Right ventricle myocardium superior (tissue), 1 donor: ENCODE measurements at regions of chr3 and their contacts with region 1.

Region 1: DNA sequence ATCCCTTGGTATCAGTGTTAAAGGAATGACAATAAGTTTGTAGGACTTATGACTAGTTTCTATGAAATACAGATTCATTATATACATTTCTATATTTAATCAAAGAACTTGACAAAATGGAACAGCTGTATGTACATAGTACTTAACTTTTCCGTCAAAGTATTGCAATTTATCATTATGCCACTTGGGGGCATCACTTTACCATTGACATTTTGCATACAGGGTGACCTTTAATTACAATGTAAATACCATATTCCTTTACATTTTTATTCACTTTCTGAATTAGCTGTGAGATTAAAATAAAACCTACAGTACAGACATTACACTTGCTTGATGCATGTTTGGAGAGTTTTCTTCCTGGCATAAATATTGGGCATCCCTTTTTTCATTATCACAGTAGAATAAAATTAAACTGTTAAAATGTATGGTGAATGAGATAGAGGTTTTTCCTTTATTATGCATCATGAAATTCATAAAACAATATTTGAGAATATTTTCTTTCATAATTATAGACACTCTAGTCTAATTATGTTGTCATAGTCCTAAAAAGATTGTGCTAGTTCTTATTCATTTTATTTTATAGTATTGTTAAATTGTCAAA is 6.9 kb downstream of the NEK11 start:
- DNase-seq: no peak
- ATAC-seq: no peak

Region 2: GRCh38 chr3:130671545-130672312 is 361.9 kb before region 1 on chr3:
- intact Hi-C with region 1: no loop called
- DNase-seq: no peak
- ATAC-seq: no peak

Region 3: DNA sequence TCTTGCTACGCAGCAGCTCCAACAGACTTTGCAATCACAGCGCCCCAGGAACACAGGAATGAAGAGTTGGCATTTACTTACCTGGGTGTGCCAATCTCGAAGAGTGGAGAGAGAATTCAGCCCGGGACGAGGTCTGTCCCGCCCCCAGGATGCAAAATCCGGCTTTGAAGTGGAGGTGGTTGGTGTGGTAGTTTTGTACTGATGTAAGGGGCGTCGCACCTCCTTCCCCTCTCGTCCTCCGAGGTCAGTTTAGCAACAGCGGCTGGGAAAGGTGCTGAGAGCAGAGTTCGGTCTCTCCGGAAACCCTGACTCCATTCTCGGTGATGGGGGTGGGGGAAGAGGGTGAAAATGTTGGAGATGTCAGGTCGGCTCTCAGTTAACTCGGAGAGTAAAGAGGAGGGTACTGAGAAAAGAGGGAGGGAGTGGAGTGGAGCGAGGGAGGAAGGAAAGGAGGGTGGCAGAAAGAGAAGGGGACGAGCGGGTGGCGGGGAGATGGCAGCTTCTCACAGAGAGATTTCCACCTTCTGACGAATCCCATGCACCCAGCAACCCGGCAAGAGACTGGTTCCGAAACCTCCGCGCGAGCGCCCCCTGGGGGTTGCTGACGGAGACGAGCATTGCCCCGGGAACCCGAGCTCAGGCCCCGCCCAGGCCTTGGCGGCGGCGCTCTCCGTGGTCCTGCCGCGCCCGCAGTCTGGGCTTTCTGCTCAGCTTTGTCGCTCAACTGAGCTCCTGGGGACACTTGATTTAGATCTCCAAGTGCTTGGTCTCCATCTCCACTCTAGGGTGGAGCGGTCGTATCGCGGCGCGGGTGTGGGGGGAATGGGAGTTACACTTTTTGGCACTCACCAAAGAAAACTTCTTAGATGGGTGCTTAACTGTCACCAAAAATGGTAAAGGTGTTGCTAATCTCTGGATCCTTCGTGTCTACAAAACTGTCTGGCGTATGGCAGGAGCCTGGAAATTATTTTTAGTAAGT is 1001.2 kb after region 1 on chr3 and contains the start of gene CPNE4:
- intact Hi-C with region 1: loop called (anchors 10 kb)
- DNase-seq: peak; percentile 83
- ATAC-seq: peak; percentile 96
- total RNA-seq, gene CPNE4: 52.3 TPM